ENCODE measurements at regions of chr9 and their contacts with region 1.

Region 1: DNA sequence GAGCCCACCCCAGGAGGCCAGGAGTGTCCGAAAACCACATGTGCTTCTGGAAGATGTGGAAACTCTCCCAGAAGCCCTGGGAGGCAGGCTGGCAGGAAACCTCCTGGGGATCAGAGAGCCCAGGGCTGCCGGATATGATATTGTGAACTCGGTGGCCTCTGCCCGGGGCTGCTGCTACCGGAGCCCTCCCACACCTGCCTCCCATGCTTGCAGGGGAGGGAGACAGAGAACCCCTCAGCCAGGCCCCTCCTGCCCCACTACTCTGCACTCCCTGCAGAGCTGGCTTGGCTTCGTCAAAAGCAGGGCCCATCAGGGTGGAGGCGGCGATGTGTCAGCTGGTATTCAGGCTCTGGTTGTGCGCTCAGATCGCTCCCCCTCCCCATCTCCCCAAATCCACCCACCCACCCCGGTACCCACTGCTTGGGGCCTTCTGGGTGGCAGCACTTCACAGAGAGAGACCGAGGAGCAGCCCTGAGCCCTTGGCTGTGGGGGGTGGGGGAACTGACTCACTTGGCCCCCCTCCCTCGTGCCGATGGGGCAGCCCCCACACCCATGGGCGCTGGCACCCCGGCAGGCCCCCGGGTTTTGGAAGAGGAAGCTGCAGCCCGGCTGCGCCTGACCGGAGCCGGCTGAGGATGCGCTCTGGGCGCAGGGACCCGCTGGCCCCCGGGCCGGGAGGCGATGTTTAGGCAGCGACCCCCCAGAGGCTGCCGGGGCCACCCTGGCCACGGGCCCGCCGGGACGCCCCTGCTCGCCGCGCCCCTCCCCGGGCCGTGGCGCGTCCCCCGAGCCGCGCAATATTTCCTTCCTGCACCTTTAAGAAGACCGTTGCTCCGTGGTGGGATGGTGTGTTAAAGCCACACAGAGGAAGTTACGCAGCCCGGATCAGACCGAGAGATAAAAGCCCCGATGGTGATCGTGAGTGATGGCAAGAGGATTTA is 786 bp upstream of the NTNG2 start:
- DNase-seq: peak; percentile 77
- ATAC-seq: peak; percentile 76
- H3K4me3 ChIP-seq: peak overlapping the region; percentile 38 to 67 (median 55)
- H3K4me3 Mint-ChIP-seq: peak overlapping the region; percentile 87
- H3K27ac ChIP-seq: no peak overlapping the region
- H3K27ac Mint-ChIP-seq: peak overlapping the region; percentile 69
- H3K4me1 ChIP-seq: peaks cover 26 to 30% of the 10 kb centered on the region in 2 donors
- H3K4me1 Mint-ChIP-seq: peaks cover 13% of the 10 kb centered on the region
- H3K27me3 ChIP-seq: peaks cover 0 to 71% (median 32%) of the 10 kb centered on the region in 4 experiments
- H3K27me3 Mint-ChIP-seq: peaks cover 40% of the 10 kb centered on the region
- CTCF ChIP-seq: no peak

Region 2: DNA sequence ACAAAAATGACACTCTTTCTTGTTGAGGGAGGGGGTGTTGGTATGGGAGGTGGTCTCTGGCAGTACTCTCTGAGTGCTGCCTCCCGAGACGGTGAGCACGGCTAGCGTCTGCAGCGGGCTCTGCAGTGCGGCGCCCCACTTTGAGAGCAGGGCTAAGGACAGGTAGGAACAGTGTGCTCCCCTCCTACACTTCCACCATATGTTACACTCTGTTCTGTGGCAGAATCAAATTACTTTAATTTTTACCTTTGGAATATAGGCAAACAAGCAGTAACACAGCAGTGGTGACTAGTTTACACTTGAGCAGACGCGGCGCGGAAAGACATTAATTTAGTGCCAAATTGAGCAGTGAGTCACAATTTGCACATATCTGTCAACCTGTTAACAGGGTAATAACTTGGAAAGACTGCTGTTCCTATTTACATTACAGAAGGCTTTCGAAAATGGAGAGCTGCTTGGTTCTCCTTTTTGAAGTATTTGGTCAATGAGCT is 217.7 kb before region 1 on chr9:
- CTCF ChIA-PET with region 1: no interaction called
- POLR2A ChIA-PET with region 1: no interaction called
- intact Hi-C with region 1: no loop called
- DNase-seq: no peak
- ATAC-seq: no peak
- H3K4me3 ChIP-seq: no peak overlapping the region
- H3K4me3 Mint-ChIP-seq: no peak overlapping the region
- H3K27ac ChIP-seq: no peak overlapping the region
- H3K27ac Mint-ChIP-seq: no peak overlapping the region
- H3K4me1 ChIP-seq: no peaks in the 10 kb centered on the region
- H3K4me1 Mint-ChIP-seq: no peaks in the 10 kb centered on the region
- H3K27me3 ChIP-seq: no peaks in the 10 kb centered on the region
- H3K27me3 Mint-ChIP-seq: no peaks in the 10 kb centered on the region
- CTCF ChIP-seq: no peak

Region 3: DNA sequence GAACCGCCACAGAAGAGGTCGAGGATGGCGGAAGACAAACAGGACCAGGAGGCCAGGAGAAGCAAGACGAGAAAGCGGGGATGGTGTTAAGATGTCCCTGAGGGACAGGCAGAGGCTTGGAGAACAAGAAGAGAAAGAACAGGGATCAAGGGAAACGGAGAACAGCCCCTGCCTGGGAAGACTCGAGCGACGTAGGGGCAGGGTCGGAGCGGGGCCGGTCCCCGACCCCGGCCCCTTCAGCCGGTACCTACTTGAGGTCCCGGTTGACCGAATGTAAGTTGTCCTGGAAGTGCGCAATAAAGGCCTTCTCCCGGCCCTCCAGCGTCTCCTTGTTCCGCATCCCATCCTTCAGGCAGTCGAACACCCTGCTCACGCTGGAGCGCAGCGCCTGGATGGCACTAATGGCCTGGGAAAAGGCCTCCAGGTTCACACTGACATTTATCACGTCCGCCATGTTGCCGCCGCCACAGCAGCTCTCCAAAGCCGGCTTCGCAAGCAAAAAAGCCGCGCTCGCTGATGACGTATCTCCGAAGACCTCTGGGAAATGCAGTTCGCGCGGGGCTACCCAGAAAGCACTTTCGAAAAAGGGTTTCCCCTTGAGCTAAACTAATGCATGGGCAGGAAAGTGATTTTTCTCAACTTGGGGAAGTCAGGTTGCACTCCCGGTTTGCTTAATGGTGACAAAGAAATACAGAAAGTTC is 81.5 kb before region 1 on chr9 and contains the start of gene MED27:
- CTCF ChIA-PET with region 1: no interaction called
- POLR2A ChIA-PET with region 1: no interaction called
- intact Hi-C with region 1: loop called (anchors 5 kb)
- DNase-seq: peak; percentile 95
- ATAC-seq: peak; percentile 99
- H3K4me3 ChIP-seq: peak within 1 kb of the TSS; percentile 60 to 89 (median 81)
- H3K4me3 Mint-ChIP-seq: peak within 1 kb of the TSS; percentile 96
- H3K27ac ChIP-seq: peak within 1 kb of the TSS; percentile 13 to 80
- H3K27ac Mint-ChIP-seq: peak within 1 kb of the TSS; percentile 94
- H3K4me1 ChIP-seq: peaks cover 15 to 17% of the 10 kb centered on the region in 2 donors
- H3K4me1 Mint-ChIP-seq: peaks cover 28% of the 10 kb centered on the region
- H3K27me3 ChIP-seq: peaks cover 0 to 5% (median 0%) of the 10 kb centered on the region in 4 experiments
- H3K27me3 Mint-ChIP-seq: peaks cover 4% of the 10 kb centered on the region
- CTCF ChIP-seq: no peak
- total RNA-seq, gene MED27: 17.4 and 24.4 TPM in 2 replicates